ENCODE measurements at regions of chr20 and their contacts with region 1.

Region 1: DNA sequence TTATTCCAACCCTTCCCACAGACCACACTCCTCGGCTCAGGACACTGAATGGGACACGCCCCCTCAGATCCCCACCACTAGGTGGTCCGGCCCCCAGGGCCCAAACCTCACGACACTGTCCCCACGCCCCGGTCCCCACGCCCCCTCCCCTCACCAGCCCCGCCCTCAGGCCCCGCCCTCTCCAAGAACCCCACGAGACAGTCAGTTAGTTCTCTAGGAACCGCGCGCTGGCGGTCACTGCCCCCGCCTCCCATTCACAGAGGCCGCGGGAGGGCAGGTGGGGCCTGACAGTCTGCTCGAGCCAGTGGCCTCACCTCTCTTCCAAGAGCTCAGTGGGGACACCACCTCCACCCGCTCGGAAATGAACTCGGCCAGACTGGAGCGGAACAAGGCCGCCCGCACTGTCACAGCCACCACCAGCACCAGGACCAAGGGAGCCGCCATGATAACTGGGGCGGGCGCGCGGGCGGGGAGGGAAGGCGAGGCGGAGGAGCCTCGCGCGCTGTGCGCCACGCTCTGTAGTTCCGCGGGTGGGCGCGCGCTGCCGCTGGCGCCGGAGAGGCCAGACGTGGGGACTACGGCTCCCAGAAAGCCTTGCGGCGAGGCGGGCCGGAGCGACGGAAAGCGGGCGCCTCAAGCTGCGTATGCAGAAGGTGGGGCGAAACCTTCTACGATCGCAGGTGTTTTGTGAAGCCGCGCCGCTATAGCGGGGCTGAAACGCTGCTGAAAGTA is at the start of gene PIGU:
- DNase-seq: peak; percentile 83 to 98
- H3K4me3 ChIP-seq: peak within 1 kb of the TSS; percentile 68
- H3K27ac ChIP-seq: peak within 1 kb of the TSS; percentile 74
- H3K4me1 ChIP-seq: peaks cover 22% of the 10 kb centered on the region
- H3K27me3 ChIP-seq: no peaks in the 10 kb centered on the region
- CTCF ChIP-seq: no peak
- total RNA-seq, gene PIGU: 20.9 and 25.0 TPM in 2 replicates

Region 2: GRCh38 chr20:33773412-33774089 is 903.3 kb before region 1 on chr20:
- CTCF ChIA-PET with region 1: no interaction called
- POLR2A ChIA-PET with region 1: no interaction called
- intact Hi-C with region 1: no loop called
- DNase-seq: no peak
- H3K4me3 ChIP-seq: no peak overlapping the region
- H3K27ac ChIP-seq: no peak overlapping the region
- H3K4me1 ChIP-seq: peaks cover 13% of the 10 kb centered on the region
- H3K27me3 ChIP-seq: no peaks in the 10 kb centered on the region
- CTCF ChIP-seq: no peak

Region 3: GRCh38 chr20:34302723-34303528 is 373.9 kb before region 1 on chr20 and contains the start of gene AHCY:
- CTCF ChIA-PET with region 1: no interaction called
- POLR2A ChIA-PET with region 1: no interaction called
- intact Hi-C with region 1: loop called (anchors 2 kb)
- DNase-seq: peak; percentile 94 to 99
- H3K4me3 ChIP-seq: peak within 1 kb of the TSS; percentile 99
- H3K27ac ChIP-seq: peak within 1 kb of the TSS; percentile 81
- H3K4me1 ChIP-seq: peaks cover 20% of the 10 kb centered on the region
- H3K27me3 ChIP-seq: no peaks in the 10 kb centered on the region
- CTCF ChIP-seq: peak; percentile 13; the same call in 1 of the 2 replicates
- total RNA-seq, gene AHCY: 247 and 273 TPM in 2 replicates

Region 4: DNA sequence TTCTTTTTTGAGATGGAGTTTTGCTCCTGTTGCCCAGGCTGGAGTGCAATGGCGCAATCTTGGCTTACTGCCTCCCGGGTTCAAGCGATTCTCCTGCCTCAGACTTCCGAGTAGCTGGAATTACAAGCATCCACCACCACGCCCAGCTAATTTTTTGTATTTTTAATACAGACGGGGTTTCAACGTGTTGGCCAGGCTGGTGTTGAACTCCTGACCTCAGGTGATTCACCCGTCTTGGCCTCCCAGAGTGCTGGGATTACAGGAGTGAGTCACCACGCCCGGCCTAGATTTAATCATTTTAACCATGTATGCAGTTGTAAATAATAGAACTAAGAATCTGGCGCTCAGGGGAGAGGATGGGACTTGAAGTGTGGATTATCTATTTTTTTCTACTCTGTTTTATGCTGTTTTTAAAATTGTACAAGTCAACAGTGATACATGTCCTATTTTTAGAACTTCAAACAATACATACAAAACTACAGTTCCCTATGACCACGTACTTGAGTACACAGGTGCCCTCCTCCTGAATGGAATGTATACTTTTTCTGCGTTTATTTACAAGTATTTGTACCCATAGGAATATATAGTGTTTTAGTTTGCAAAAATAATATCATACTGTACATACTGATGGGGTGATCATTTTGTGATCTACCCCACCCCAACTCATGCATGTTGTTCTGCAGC is 285.9 kb before region 1 on chr20:
- CTCF ChIA-PET with region 1: no interaction called
- POLR2A ChIA-PET with region 1: no interaction called
- intact Hi-C with region 1: loop called (anchors 10 kb)
- DNase-seq: peak; percentile 94 to 96
- H3K4me3 ChIP-seq: peak overlapping the region; percentile 31; the same call in 1 of the 2 replicates
- H3K27ac ChIP-seq: peak overlapping the region; percentile 76
- H3K4me1 ChIP-seq: peaks cover 59% of the 10 kb centered on the region
- H3K27me3 ChIP-seq: no peaks in the 10 kb centered on the region
- CTCF ChIP-seq: no peak

Region 5: GRCh38 chr20:34522969-34523871 is 153.6 kb before region 1 on chr20:
- CTCF ChIA-PET with region 1: no interaction called
- POLR2A ChIA-PET with region 1: no interaction called
- intact Hi-C with region 1: loop called (anchors 5 kb)
- DNase-seq: peak; percentile 44 to 55
- H3K4me3 ChIP-seq: no peak overlapping the region
- H3K27ac ChIP-seq: no peak overlapping the region
- H3K4me1 ChIP-seq: peaks cover 37% of the 10 kb centered on the region
- H3K27me3 ChIP-seq: no peaks in the 10 kb centered on the region
- CTCF ChIP-seq: peak; percentile 57

Region 6: GRCh38 chr20:34579191-34579978 is 97.4 kb before region 1 on chr20:
- CTCF ChIA-PET with region 1: no interaction called
- POLR2A ChIA-PET with region 1: interaction called, 3 read pairs
- intact Hi-C with region 1: loop called (anchors 1 kb)
- DNase-seq: peak; percentile 61 to 78
- H3K4me3 ChIP-seq: no peak overlapping the region
- H3K27ac ChIP-seq: no peak overlapping the region
- H3K4me1 ChIP-seq: peaks cover 31% of the 10 kb centered on the region
- H3K27me3 ChIP-seq: no peaks in the 10 kb centered on the region
- CTCF ChIP-seq: peak; percentile 79

Region 7: DNA sequence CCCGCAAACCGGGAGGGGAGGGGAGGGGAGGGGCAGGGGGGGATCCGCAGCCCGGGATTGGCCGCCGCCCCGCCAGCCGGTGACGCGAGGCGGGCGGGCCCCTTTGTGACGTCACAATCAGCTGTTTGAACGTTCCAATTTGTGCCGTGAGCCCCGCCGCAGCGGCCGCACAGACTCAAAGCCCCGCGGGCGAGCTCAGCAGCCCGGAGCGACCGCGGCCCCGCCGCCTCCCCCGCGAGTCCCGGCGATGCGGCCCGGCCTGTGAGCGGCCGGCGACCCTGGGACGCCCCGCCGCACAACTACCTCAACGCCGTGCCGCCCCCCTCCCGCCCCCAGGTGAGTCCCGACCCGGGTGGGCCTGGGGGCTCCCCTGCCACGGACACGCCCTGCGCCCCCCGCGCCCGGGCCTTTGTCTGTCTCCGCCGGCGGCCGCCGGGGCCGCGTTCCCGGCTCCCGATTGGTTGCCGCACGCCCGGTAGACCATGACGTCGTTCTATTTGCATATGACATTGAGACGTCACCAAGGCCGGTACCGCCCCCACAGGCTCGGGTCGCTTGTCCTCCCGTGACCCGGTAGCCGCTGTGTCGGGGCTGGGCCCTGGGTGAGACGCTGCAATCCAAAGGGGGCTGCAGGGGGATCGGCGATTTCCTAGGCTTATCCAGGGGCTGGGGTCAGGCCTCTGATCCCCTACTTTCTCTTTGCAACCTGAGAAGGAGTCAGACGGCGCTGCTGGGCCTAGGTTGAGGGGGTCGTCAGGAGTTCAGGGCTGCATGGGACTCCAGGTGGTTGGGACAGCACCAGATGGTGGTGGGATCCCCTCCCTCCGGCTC is 27.6 kb after region 1 on chr20 and contains the start of gene TP53INP2:
- CTCF ChIA-PET with region 1: interaction called, 3 read pairs
- POLR2A ChIA-PET with region 1: interaction called, 3 read pairs
- intact Hi-C with region 1: loop called (anchors 1 kb)
- DNase-seq: peak; percentile 61 to 80
- H3K4me3 ChIP-seq: peak within 1 kb of the TSS; percentile 64
- H3K27ac ChIP-seq: peak within 1 kb of the TSS; percentile 16; the same call in 1 of the 2 replicates
- H3K4me1 ChIP-seq: peaks cover 34% of the 10 kb centered on the region
- H3K27me3 ChIP-seq: no peaks in the 10 kb centered on the region
- CTCF ChIP-seq: no peak
- total RNA-seq, gene TP53INP2: 4.4 and 4.9 TPM in 2 replicates